Heart right ventricle (tissue), 16 donors: ENCODE measurements at regions of chr15 and their contacts with region 1.

Region 1: DNA sequence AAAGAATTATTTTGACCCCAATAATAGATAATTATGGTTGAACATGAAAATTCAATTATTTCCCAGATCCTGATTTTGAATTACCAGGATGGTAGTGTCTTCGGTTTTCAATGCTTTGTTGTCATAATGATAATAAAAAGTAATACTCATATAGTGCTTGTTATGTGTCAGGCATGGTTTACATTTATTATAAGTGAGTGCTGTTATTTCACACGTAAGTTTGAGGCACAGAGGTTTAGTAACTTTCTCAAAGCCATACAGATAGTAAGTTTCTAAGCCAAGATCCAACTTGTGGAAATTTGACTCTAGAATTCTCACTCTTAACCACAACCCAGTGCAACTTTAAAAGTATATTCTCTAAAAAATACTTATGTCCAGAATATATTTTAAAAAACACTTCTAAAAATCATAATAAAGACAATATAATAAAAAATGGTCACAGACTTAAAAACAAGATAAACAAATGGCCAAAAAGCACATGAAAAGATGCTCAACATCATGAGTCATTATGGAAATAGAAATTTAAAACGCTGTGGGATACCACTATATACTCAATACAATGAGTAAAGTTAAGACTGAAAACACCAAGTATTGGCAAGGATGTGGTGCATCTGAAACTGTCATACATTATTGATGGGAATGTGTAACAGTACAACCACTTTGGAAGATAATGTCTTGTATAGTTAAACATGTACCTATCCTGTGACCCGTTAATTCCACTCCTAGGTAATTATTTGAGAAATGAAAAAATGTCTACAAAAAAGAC is 45.2 kb downstream of the SPRED1 start:
- DNase-seq: no peak
- ATAC-seq: no peak
- H3K4me3 ChIP-seq: no peak overlapping the region
- H3K27ac ChIP-seq: no peak overlapping the region
- H3K4me1 ChIP-seq: peaks cover 3 to 73% (median 36%) of the 10 kb centered on the region in 9 donors
- H3K27me3 ChIP-seq: no peaks in the 10 kb centered on the region
- CTCF ChIP-seq: no peak

Region 2: DNA sequence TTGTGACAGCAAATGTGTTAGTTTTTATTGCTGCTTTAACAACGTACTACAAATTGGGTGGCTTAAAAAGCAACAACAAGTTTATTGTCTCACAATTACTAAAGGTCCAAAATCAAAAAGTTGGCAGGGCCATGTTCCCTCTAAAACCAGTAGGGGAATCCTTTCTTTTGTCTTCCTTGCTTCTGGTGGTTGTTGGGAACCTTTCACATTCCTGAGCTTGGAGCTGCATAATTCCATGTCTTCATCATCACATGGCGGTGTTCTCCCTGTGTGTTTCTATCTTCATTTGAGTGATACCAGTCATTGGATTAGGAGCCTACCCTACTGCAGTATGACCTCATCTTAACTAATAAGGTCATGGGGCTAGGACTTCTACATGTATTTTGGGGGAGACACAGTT is 37.7 kb before region 1 on chr15:
- intact Hi-C with region 1: loop called in 2 of 10 experiments (anchors 5 to 10 kb)
- DNase-seq: no peak
- ATAC-seq: no peak
- H3K4me3 ChIP-seq: no peak overlapping the region
- H3K27ac ChIP-seq: no peak overlapping the region
- H3K4me1 ChIP-seq: peaks cover 0 to 93% (median 63%) of the 10 kb centered on the region in 9 donors
- H3K27me3 ChIP-seq: no peaks in the 10 kb centered on the region
- CTCF ChIP-seq: no peak

Region 3: GRCh38 chr15:38332711-38333110 is 34.9 kb after region 1 on chr15:
- intact Hi-C with region 1: loop called in 1 of 10 experiments (anchors 5 kb)
- DNase-seq: no peak
- ATAC-seq: no peak
- H3K4me3 ChIP-seq: no peak overlapping the region
- H3K27ac ChIP-seq: no peak overlapping the region
- H3K4me1 ChIP-seq: no peaks in the 10 kb centered on the region
- H3K27me3 ChIP-seq: no peaks in the 10 kb centered on the region
- CTCF ChIP-seq: no peak

Region 4: GRCh38 chr15:38414357-38414756 is 116.6 kb after region 1 on chr15:
- intact Hi-C with region 1: no loop called
- DNase-seq: peak; percentile 35 to 66
- ATAC-seq: peak in 7 of 8 donors; percentile 88 to 94 (median 93)
- H3K4me3 ChIP-seq: no peak overlapping the region
- H3K27ac ChIP-seq: no peak overlapping the region
- H3K4me1 ChIP-seq: peaks cover 0 to 10% (median 0%) of the 10 kb centered on the region in 9 donors
- H3K27me3 ChIP-seq: peaks cover 0 to 15% (median 0%) of the 10 kb centered on the region in 7 donors
- CTCF ChIP-seq: peak; percentile 45 to 75 (median 66)